ENCODE measurements at regions of chr10 and their contacts with region 1.

Region 1: GRCh38 chr10:4656576-4657182 is 169.3 kb upstream of the AKR1E2 start:
- DNase-seq: peak; percentile 52
- H3K4me3 ChIP-seq: no peak overlapping the region
- H3K27ac ChIP-seq: peak overlapping the region; percentile 37
- H3K4me1 ChIP-seq: peaks cover 10% of the 10 kb centered on the region
- H3K27me3 ChIP-seq: no peaks in the 10 kb centered on the region
- CTCF ChIP-seq: peak; percentile 89 to 91

Region 2: GRCh38 chr10:3197348-3198003 is 1459.2 kb before region 1 on chr10:
- CTCF ChIA-PET with region 1: no interaction called
- dilution Hi-C with region 1: no loop called
- in situ Hi-C with region 1: no loop called
- intact Hi-C with region 1: loop called (anchors 1 kb)
- DNase-seq: peak; percentile 77
- H3K4me3 ChIP-seq: peak overlapping the region; percentile 28 to 45 (median 30)
- H3K27ac ChIP-seq: no peak overlapping the region
- H3K4me1 ChIP-seq: peaks cover 16% of the 10 kb centered on the region
- H3K27me3 ChIP-seq: peaks cover 12% of the 10 kb centered on the region
- CTCF ChIP-seq: peak; percentile 71 to 98

Region 3: DNA sequence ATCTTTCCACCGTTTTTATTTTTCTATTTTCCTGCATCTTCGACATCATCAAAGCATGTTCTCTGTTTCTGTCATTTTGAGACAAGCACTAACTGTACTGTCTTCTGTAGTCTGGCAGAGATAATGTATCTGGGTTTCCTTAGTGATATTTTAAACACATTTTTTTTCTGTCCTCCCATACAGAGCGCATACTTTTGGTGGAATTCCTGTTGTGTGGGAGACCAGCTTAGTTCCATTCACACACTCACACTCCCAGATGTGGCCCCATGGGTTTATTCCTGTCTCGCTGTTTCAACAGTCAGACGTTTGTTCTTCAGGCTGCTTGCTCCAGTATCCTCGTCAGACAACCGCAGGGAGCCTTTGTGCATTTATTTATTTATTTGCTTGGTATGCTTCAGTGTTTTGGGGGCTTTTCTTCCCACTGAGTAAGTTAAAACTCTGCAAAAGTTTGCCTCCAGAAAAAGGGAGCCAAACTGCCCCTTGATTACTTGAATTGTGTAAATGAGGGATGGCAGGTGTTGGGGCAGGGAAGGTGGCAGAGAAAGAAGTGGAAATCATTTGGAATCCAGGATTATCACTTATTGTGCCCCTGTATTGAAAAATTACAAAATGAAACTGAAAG is 414.8 kb before region 1 on chr10:
- CTCF ChIA-PET with region 1: no interaction called
- dilution Hi-C with region 1: no loop called
- in situ Hi-C with region 1: no loop called
- intact Hi-C with region 1: loop called (anchors 2 kb)
- DNase-seq: peak; percentile 94
- H3K4me3 ChIP-seq: peak overlapping the region; percentile 27 to 51 (median 46)
- H3K27ac ChIP-seq: peak overlapping the region; percentile 97
- H3K4me1 ChIP-seq: peaks cover 47% of the 10 kb centered on the region
- H3K27me3 ChIP-seq: no peaks in the 10 kb centered on the region
- CTCF ChIP-seq: no peak

Region 4: GRCh38 chr10:4512671-4513240 is 143.9 kb before region 1 on chr10:
- CTCF ChIA-PET with region 1: no interaction called
- dilution Hi-C with region 1: no loop called
- in situ Hi-C with region 1: no loop called
- intact Hi-C with region 1: loop called (anchors 1 kb)
- DNase-seq: peak; percentile 70
- H3K4me3 ChIP-seq: no peak overlapping the region
- H3K27ac ChIP-seq: no peak overlapping the region
- H3K4me1 ChIP-seq: peaks cover 5% of the 10 kb centered on the region
- H3K27me3 ChIP-seq: no peaks in the 10 kb centered on the region
- CTCF ChIP-seq: peak; percentile 79 to 85

Region 5: DNA sequence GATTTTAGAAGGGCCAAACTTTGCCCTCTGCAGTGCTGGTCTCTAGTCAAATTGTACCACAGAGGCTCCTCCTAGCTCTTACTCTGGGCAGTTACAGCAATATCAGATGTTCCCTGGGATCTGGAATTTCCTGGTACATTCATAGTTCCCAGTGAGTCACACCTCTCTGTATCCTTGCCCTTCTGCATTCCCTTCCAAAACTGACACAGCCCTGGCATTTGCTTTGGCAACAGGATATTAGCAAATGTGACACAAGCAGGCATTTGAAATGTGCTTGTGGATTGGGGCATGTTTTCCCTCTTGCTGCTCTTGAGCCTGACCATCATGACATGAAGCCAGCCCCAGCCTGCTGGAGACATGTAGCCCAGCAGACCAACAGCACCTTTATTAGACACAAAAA is 115.4 kb before region 1 on chr10:
- CTCF ChIA-PET with region 1: no interaction called
- dilution Hi-C with region 1: loop called (anchors 10 kb)
- in situ Hi-C with region 1: no loop called
- intact Hi-C with region 1: no loop called
- DNase-seq: peak; percentile 97
- H3K4me3 ChIP-seq: no peak overlapping the region
- H3K27ac ChIP-seq: peak overlapping the region; percentile 98
- H3K4me1 ChIP-seq: peaks cover 20% of the 10 kb centered on the region
- H3K27me3 ChIP-seq: no peaks in the 10 kb centered on the region
- CTCF ChIP-seq: peak; percentile 11 to 54